Esophagus muscularis mucosa (tissue), 4 donors: ENCODE measurements at regions of chr17 and their contacts with region 1.

Region 1: GRCh38 chr17:43673516-43674323 is 12.0 kb upstream of the MEOX1 start:
- DNase-seq: peak; percentile 95
- H3K4me3 ChIP-seq: no peak overlapping the region
- H3K27ac ChIP-seq: no peak overlapping the region
- H3K4me1 ChIP-seq: peaks cover 13 to 26% (median 17%) of the 10 kb centered on the region in 4 donors
- H3K27me3 ChIP-seq: no peaks in the 10 kb centered on the region
- CTCF ChIP-seq: peak; percentile 93 to 96 (median 94)
- EP300 ChIP-seq: no peak
- POLR2A ChIP-seq: no peak

Region 2: DNA sequence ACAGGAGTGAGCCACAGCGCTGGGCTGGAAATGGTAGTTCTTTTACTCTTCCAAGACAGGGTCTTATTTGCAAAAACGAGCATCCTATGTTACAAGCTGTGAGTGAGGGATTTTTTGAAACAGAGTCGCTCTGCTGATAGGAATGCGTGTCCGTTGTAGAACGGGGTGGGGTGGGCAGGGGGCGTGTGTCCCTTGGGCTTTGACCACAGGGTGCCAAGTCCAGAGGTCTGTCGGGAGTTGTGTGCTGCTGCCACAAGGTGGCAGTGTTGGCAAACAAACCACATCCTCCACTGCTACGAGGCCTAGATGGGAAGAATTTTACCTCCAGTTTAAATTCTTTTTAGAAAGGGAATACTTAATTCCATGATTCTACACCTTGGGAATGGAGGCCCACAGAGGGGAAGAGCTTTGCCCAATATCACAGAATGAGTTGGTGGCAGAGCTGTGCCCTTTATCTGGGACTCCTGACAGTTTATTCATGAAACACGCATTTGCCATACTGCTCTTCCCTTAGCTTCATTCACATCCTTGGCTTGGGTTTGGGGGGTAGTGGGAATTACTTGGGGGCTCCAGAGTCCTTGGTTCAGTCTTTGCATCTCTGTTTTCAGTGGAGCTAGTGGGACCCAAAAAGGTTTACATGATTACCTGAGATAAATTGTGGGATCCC is 97.0 kb before region 1 on chr17:
- intact Hi-C with region 1: loop called (anchors 1 kb)
- DNase-seq: no peak
- H3K4me3 ChIP-seq: no peak overlapping the region
- H3K27ac ChIP-seq: no peak overlapping the region
- H3K4me1 ChIP-seq: peaks cover 23 to 35% (median 26%) of the 10 kb centered on the region in 4 donors
- H3K27me3 ChIP-seq: no peaks in the 10 kb centered on the region
- CTCF ChIP-seq: peak; percentile 90 to 96 (median 92)
- EP300 ChIP-seq: no peak
- POLR2A ChIP-seq: no peak